Heart left ventricle (tissue), 16 donors: ENCODE measurements at regions of chr6 and their contacts with region 1.

Region 1: GRCh38 chr6:170271771-170272314 is 19.0 kb downstream of the DLL1 start:
- DNase-seq: peak in 2 of 5 donors; percentile 56 to 79
- ATAC-seq: no peak
- H3K4me3 ChIP-seq: peak overlapping the region in 7 of 12 donors; percentile 6 to 51 (median 30)
- H3K27ac ChIP-seq: peak overlapping the region in 1 of 12 donors; percentile 49
- H3K4me1 ChIP-seq: peaks cover 3 to 32% (median 22%) of the 10 kb centered on the region in 12 donors
- H3K27me3 ChIP-seq: no peaks in the 10 kb centered on the region
- CTCF ChIP-seq: no peak
- POLR2A ChIP-seq: no peak

Region 2: GRCh38 chr6:170178561-170179477 is 93.0 kb before region 1 on chr6:
- intact Hi-C with region 1: loop called in 1 of 10 experiments (anchors 5 kb)
- DNase-seq: no peak
- ATAC-seq: peak in 3 of 4 donors; percentile 32 to 46 (median 45)
- H3K4me3 ChIP-seq: no peak overlapping the region
- H3K27ac ChIP-seq: peak overlapping the region in 1 of 12 donors; percentile 25
- H3K4me1 ChIP-seq: peaks cover 0 to 7% (median 0%) of the 10 kb centered on the region in 12 donors
- H3K27me3 ChIP-seq: no peaks in the 10 kb centered on the region
- CTCF ChIP-seq: no peak
- POLR2A ChIP-seq: no peak

Region 3: DNA sequence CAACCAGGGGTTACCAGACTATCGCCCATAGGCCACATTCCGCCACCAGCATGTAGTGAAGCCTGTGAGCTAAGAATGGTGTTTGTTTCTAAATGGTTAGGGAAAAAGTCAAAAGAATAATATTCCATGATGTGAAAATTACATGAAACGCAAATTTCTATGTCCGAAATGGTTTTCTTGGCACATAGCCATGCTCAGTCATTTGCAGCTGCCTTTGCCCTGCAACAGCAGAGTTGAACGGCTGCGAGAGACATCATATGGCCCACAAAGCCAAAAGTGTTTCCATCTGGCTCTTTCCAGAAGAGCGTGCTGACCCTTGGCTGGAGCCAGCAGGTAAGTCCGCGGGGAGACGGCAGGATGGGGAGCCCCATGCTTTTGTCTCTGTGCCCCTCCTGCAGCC is 95.4 kb after region 1 on chr6:
- intact Hi-C with region 1: no loop called
- DNase-seq: no peak
- ATAC-seq: no peak
- H3K4me3 ChIP-seq: no peak overlapping the region
- H3K27ac ChIP-seq: no peak overlapping the region
- H3K4me1 ChIP-seq: peaks cover 0 to 17% (median 9%) of the 10 kb centered on the region in 12 donors
- H3K27me3 ChIP-seq: no peaks in the 10 kb centered on the region
- CTCF ChIP-seq: no peak
- POLR2A ChIP-seq: no peak